CD4-positive, alpha-beta memory T cell (primary cell): ENCODE measurements at regions of chr6 and their contacts with region 1.

Region 1: DNA sequence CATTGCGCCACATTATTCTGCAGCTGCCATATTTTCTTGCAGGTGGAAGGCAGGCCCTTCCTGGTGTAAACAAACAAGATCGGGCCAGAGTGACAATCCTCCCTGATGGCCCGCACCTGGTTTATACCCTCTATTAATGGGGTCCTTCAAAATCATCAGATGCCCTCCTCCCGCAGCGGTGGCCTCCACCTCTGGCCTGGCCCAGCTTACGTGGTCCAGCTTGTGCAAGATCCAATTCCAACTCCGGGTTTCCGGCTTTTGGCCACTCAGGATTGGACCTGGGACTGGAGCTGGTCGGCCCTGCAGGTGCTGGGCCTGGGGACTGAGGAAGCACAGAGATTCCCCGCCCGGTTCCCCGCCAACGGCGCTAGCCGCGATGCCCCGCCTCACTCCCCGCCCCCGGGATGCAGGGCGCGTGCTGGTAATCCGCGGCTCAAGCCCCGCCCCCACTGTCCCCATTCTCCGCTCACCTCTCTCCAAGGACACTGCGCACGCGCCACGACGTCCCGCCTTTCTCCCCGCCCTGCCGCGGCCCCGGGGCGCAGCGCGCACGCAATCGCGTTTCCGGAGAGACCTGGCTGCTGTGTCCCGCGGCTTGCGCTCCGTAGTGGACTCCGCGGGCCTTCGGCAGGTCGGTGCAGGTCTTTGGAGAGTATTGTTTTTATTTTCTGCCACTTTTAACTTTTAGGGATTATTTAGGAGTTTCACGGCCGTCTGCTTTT is at the start of gene TMEM14B:
- DNase-seq: peak; percentile 98 to 99 (median 99)
- H3K4me3 ChIP-seq: peak within 1 kb of the TSS; percentile 76 to 83
- H3K4me3 Mint-ChIP-seq: peak within 1 kb of the TSS; percentile 86 to 99 (median 96)
- H3K27ac ChIP-seq: peak within 1 kb of the TSS; percentile 74
- H3K27ac Mint-ChIP-seq: peak within 1 kb of the TSS; percentile 96 to 99 (median 97)
- H3K4me1 ChIP-seq: peaks cover 44% of the 10 kb centered on the region
- H3K4me1 Mint-ChIP-seq: peaks cover 22 to 72% (median 51%) of the 10 kb centered on the region in 4 donors
- H3K27me3 ChIP-seq: no peaks in the 10 kb centered on the region
- H3K27me3 Mint-ChIP-seq: no peaks in the 10 kb centered on the region
- total RNA-seq, gene TMEM14B: 76.9 to 80.6 TPM

Region 2: DNA sequence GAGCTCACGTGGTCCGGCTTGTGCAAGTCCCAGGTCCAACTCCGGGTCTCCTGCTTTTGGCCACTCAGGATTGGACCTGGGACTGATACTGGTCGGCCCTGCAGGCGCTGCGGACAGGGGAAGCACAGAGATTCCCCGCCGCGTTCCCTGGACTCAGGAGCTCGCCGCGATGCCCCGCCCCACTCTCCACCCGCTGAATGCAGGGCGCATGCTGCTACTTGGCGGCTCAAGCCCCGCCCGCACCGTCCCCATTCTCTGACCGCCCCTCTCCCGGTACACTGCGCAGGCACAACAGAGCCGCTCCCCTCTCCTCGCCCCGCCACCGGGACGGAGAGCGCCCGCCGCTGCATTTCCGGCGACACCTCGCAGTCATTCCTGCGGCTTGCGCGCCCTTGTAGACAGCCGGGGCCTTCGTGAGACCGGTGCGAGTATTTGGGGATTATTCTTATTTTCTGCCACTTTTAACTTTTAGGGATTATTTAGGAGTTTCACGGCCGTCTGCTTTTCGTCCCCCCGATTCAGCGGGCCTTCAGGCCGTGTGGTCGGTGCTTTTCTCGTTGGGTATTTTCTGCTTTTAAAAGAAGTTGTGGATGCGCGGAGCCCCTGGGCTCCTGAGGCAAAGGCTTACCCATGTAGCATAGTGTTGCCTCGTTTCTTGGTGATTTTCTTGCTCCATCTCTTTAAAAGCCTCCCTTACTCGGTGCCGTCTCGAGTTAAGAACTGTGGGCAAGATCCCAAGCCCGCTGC is 24.4 kb before region 1 on chr6 and contains the start of gene TMEM14C:
- CTCF ChIA-PET with region 1: interaction called, 9 read pairs
- POLR2A ChIA-PET with region 1: interaction called, 118 read pairs
- intact Hi-C with region 1: loop called (anchors 1 kb)
- DNase-seq: peak; percentile 61 to 80 (median 68)
- H3K4me3 ChIP-seq: peak within 1 kb of the TSS; percentile 24 to 57
- H3K4me3 Mint-ChIP-seq: peak within 1 kb of the TSS; percentile 93 to 97 (median 96)
- H3K27ac ChIP-seq: peak within 1 kb of the TSS; percentile 62
- H3K27ac Mint-ChIP-seq: peak within 1 kb of the TSS; percentile 84 to 96 (median 93)
- H3K4me1 ChIP-seq: peaks cover 48% of the 10 kb centered on the region
- H3K4me1 Mint-ChIP-seq: peaks cover 34 to 64% (median 48%) of the 10 kb centered on the region in 4 donors
- H3K27me3 ChIP-seq: no peaks in the 10 kb centered on the region
- H3K27me3 Mint-ChIP-seq: no peaks in the 10 kb centered on the region
- total RNA-seq, gene TMEM14C: 34.1 to 37.3 TPM

Region 3: DNA sequence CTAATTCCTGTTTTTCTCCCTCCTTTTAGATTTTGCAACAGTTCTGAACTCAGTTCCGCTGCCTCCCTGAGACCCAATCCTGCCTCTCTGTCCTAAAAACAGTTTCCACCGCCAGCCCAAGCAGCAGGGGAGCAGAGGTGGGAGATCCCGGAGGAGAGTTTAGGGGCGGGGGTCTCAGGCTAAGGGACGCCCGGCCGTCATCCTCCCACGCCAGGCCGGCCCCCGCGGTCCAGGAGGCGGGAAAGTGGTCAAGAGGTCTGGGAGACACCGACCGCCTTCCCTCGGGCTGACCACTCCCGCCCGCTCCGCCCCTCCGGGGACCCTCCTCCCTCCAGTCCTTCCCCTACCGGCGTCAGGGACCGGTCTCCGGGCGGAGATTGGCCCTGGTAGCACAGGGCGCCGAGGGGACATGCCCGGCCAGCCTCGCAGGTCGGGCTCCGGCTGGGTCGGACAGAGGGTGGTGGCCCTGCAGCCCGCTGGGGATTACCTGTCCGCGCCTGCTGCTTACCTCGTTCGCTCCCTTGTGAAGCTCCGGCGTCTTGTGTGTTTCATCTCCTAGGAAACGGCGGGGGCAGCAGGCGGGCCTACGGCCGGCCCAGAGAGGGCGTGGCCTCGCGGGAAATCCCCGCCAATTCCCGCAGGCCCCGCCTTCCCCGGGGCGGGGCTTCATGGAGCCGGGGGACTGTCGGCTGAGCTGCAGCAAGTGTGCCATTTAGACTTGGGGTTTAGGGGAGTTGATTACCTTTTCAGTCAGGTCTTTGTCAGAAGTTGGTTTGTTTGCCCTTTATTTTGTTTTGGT is 90.8 kb after region 1 on chr6 and contains the start of gene MAK:
- CTCF ChIA-PET with region 1: no interaction called
- POLR2A ChIA-PET with region 1: no interaction called
- intact Hi-C with region 1: loop called (anchors 1 kb)
- DNase-seq: peak; percentile 89 to 91 (median 90)
- H3K4me3 ChIP-seq: peak within 1 kb of the TSS; percentile 5 to 44
- H3K4me3 Mint-ChIP-seq: peak within 1 kb of the TSS; percentile 79 to 92 (median 84)
- H3K27ac ChIP-seq: peak within 1 kb of the TSS; percentile 22
- H3K27ac Mint-ChIP-seq: peak within 1 kb of the TSS; percentile 36 to 90 (median 82)
- H3K4me1 ChIP-seq: peaks cover 25% of the 10 kb centered on the region
- H3K4me1 Mint-ChIP-seq: peaks cover 7 to 26% (median 20%) of the 10 kb centered on the region in 4 donors
- H3K27me3 ChIP-seq: peaks cover 41% of the 10 kb centered on the region
- H3K27me3 Mint-ChIP-seq: peaks cover 37 to 51% of the 10 kb centered on the region in 2 donors
- total RNA-seq, gene MAK: not detected

Region 4: GRCh38 chr6:11537229-11538051 is 790.0 kb after region 1 on chr6 and contains the start of gene TMEM170B:
- CTCF ChIA-PET with region 1: no interaction called
- POLR2A ChIA-PET with region 1: no interaction called
- intact Hi-C with region 1: loop called (anchors 5 kb)
- DNase-seq: peak; percentile 94 to 98 (median 97)
- H3K4me3 ChIP-seq: peak within 1 kb of the TSS; percentile 60 to 77
- H3K4me3 Mint-ChIP-seq: peak within 1 kb of the TSS; percentile 86 to 92 (median 90)
- H3K27ac ChIP-seq: peak within 1 kb of the TSS; percentile 54
- H3K27ac Mint-ChIP-seq: peak within 1 kb of the TSS; percentile 72 to 94 (median 92)
- H3K4me1 ChIP-seq: peaks cover 11% of the 10 kb centered on the region
- H3K4me1 Mint-ChIP-seq: peaks cover 7 to 24% (median 9%) of the 10 kb centered on the region in 4 donors
- H3K27me3 ChIP-seq: no peaks in the 10 kb centered on the region
- H3K27me3 Mint-ChIP-seq: peaks cover 2 to 4% of the 10 kb centered on the region in 2 donors
- total RNA-seq, gene TMEM170B: 1.9 to 2.1 TPM